B cell (primary cell): ENCODE measurements at regions of chr1 and their contacts with region 1.

Region 1: GRCh38 chr1:3453203-3453761 is 1.2 kb upstream of the ARHGEF16 start:
- DNase-seq: peak; percentile 82
- ATAC-seq: peak; percentile 84
- H3K4me3 ChIP-seq: no peak overlapping the region
- H3K4me3 Mint-ChIP-seq: peak overlapping the region; percentile 71
- H3K27ac ChIP-seq: no peak overlapping the region
- H3K27ac Mint-ChIP-seq: no peak overlapping the region
- H3K4me1 ChIP-seq: peaks cover 16 to 20% of the 10 kb centered on the region in 2 donors
- H3K4me1 Mint-ChIP-seq: peaks cover 3% of the 10 kb centered on the region
- H3K27me3 ChIP-seq: peaks cover 0 to 44% (median 21%) of the 10 kb centered on the region in 4 experiments
- H3K27me3 Mint-ChIP-seq: peaks cover 26% of the 10 kb centered on the region
- CTCF ChIP-seq: peak; percentile 92

Region 2: GRCh38 chr1:3467096-3468036 is 14.1 kb after region 1 on chr1:
- CTCF ChIA-PET with region 1: interaction called, 11 read pairs
- POLR2A ChIA-PET with region 1: no interaction called
- intact Hi-C with region 1: no loop called
- DNase-seq: no peak
- ATAC-seq: no peak
- H3K4me3 ChIP-seq: no peak overlapping the region
- H3K4me3 Mint-ChIP-seq: no peak overlapping the region
- H3K27ac ChIP-seq: no peak overlapping the region
- H3K27ac Mint-ChIP-seq: no peak overlapping the region
- H3K4me1 ChIP-seq: no peaks in the 10 kb centered on the region
- H3K4me1 Mint-ChIP-seq: peaks cover 4% of the 10 kb centered on the region
- H3K27me3 ChIP-seq: no peaks in the 10 kb centered on the region
- H3K27me3 Mint-ChIP-seq: peaks cover 3% of the 10 kb centered on the region
- CTCF ChIP-seq: no peak

Region 3: GRCh38 chr1:3482590-3482899 is 29.3 kb after region 1 on chr1:
- CTCF ChIA-PET with region 1: interaction called, 20 read pairs
- POLR2A ChIA-PET with region 1: no interaction called
- intact Hi-C with region 1: no loop called
- DNase-seq: no peak
- ATAC-seq: peak; percentile 40
- H3K4me3 ChIP-seq: no peak overlapping the region
- H3K4me3 Mint-ChIP-seq: no peak overlapping the region
- H3K27ac ChIP-seq: no peak overlapping the region
- H3K27ac Mint-ChIP-seq: no peak overlapping the region
- H3K4me1 ChIP-seq: no peaks in the 10 kb centered on the region
- H3K4me1 Mint-ChIP-seq: no peaks in the 10 kb centered on the region
- H3K27me3 ChIP-seq: no peaks in the 10 kb centered on the region
- H3K27me3 Mint-ChIP-seq: peaks cover 3% of the 10 kb centered on the region
- CTCF ChIP-seq: no peak

Region 4: GRCh38 chr1:3491291-3492246 is 38.3 kb after region 1 on chr1:
- CTCF ChIA-PET with region 1: interaction called, 20 read pairs
- POLR2A ChIA-PET with region 1: no interaction called
- intact Hi-C with region 1: loop called (anchors 2 kb)
- DNase-seq: peak; percentile 89
- ATAC-seq: peak; percentile 98
- H3K4me3 ChIP-seq: peak overlapping the region in 3 of 5 experiments; percentile 12 to 37 (median 36)
- H3K4me3 Mint-ChIP-seq: peak overlapping the region; percentile 69
- H3K27ac ChIP-seq: no peak overlapping the region
- H3K27ac Mint-ChIP-seq: peak overlapping the region; percentile 10
- H3K4me1 ChIP-seq: peaks cover 0 to 7% of the 10 kb centered on the region in 2 donors
- H3K4me1 Mint-ChIP-seq: peaks cover 6% of the 10 kb centered on the region
- H3K27me3 ChIP-seq: no peaks in the 10 kb centered on the region
- H3K27me3 Mint-ChIP-seq: no peaks in the 10 kb centered on the region
- CTCF ChIP-seq: peak; percentile 100

Region 5: DNA sequence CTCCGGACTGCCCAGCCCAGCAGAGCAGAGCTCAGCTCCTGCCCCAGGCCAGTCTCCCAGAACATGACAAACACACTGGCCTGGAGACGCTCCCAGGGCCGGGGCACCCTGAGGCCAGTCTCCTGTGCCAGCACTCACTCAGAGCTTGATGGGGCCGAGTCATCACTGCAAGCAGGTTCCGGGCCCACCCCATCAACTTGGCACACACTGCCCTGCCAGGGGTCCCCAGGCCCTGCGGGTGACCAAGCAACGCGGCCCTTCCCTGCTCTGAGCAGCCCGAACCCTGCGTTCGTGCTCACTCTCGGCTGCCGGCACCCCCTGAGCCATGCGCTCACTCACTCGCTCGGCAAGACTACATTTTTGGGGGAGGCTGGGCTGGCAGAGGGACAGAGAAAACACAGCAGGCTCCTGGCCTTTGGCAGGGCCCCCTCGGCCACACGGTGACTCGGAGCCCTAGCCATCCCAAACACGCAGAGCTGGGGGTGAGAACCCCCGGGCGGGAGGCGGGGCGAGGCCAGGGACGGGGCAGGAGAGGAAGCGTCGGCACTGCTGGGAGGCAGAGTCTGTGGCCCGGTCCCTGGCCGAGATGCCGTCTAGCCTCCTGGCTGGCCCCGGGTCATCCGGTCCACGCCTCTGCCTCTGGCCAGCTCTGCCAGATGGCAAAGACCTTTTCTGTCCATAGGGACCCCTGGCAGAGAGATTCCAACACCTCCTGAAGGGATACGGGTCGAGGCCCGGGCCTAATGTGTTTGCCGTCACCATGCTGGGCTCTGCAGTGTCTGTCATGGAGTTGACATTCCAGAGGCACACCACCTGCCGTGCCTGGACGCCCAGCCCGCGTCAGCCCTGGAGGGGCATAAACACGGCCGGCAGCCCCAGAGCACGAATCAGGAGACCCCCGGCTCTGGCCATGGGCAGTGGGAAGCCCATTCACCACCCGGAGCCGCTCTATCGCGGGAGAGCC is 90.1 kb after region 1 on chr1:
- CTCF ChIA-PET with region 1: no interaction called
- POLR2A ChIA-PET with region 1: no interaction called
- intact Hi-C with region 1: no loop called
- DNase-seq: no peak
- ATAC-seq: no peak
- H3K4me3 ChIP-seq: no peak overlapping the region
- H3K4me3 Mint-ChIP-seq: no peak overlapping the region
- H3K27ac ChIP-seq: no peak overlapping the region
- H3K27ac Mint-ChIP-seq: no peak overlapping the region
- H3K4me1 ChIP-seq: peaks cover 0 to under 1% of the 10 kb centered on the region in 2 donors
- H3K4me1 Mint-ChIP-seq: no peaks in the 10 kb centered on the region
- H3K27me3 ChIP-seq: no peaks in the 10 kb centered on the region
- H3K27me3 Mint-ChIP-seq: no peaks in the 10 kb centered on the region
- CTCF ChIP-seq: no peak

Region 6: GRCh38 chr1:3803905-3804626 is 350.8 kb after region 1 on chr1:
- CTCF ChIA-PET with region 1: interaction called, 15 read pairs
- POLR2A ChIA-PET with region 1: no interaction called
- intact Hi-C with region 1: loop called (anchors 5 kb)
- DNase-seq: no peak
- ATAC-seq: no peak
- H3K4me3 ChIP-seq: no peak overlapping the region
- H3K4me3 Mint-ChIP-seq: no peak overlapping the region
- H3K27ac ChIP-seq: no peak overlapping the region
- H3K27ac Mint-ChIP-seq: no peak overlapping the region
- H3K4me1 ChIP-seq: peaks cover 0 to 3% of the 10 kb centered on the region in 2 donors
- H3K4me1 Mint-ChIP-seq: peaks cover 4% of the 10 kb centered on the region
- H3K27me3 ChIP-seq: peaks cover 0 to 14% (median 4%) of the 10 kb centered on the region in 4 experiments
- H3K27me3 Mint-ChIP-seq: peaks cover 30% of the 10 kb centered on the region
- CTCF ChIP-seq: no peak